CD8-positive, alpha-beta T cell (primary cell): ENCODE measurements at regions of chr2 and their contacts with region 1.

Region 1: GRCh38 chr2:223837287-223838061 is at the start of gene AP1S3:
- DNase-seq: peak; percentile 34 to 91 (median 67)
- ATAC-seq: peak; percentile 90
- H3K4me3 ChIP-seq: peak within 1 kb of the TSS; percentile 65 to 85
- H3K4me3 Mint-ChIP-seq: peak within 1 kb of the TSS; percentile 96
- H3K27ac ChIP-seq: peak within 1 kb of the TSS in 1 of 2 experiments; percentile 15
- H3K27ac Mint-ChIP-seq: peak within 1 kb of the TSS; percentile 85
- H3K4me1 ChIP-seq: peaks cover 7% of the 10 kb centered on the region
- H3K4me1 Mint-ChIP-seq: peaks cover 11% of the 10 kb centered on the region
- H3K27me3 ChIP-seq: no peaks in the 10 kb centered on the region
- H3K27me3 Mint-ChIP-seq: peaks cover 6% of the 10 kb centered on the region
- CTCF ChIP-seq: no peak
- total RNA-seq, gene AP1S3: 0.76 to 1.2 TPM

Region 2: DNA sequence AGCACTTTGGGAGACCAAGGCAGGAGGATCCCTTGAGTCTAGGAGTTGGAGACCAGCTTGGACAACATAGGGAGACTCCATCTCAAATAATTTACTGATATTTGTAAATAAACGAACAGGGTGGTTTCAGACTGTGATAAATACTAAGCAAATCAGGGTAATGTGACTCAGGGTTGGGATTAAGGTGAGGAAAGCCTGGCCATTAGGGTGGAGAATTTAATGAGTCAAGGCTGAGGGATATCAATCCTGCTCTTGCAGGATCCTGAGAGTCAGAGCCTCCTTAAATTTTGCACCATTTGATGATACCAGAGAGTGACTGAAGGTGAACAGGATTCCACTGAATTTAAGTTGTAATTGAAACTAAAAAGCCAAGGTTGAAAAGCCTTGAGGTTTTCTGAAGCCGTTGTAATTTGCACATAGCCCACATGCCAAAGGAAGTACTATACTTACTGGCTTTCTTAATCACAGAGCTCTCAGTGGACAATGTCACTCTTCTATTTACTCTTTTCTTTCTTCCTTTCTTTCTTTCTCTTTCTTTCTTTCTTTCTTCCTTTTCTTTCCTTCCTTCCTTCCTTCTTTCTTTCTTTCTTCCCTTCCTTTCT is 28.5 kb after region 1 on chr2:
- CTCF ChIA-PET with region 1: no interaction called
- POLR2A ChIA-PET with region 1: no interaction called
- intact Hi-C with region 1: loop called in 1 of 2 experiments (anchors 2 kb)
- DNase-seq: peak in 2 of 9 experiments; percentile 23 to 51
- ATAC-seq: peak; percentile 33
- H3K4me3 ChIP-seq: no peak overlapping the region
- H3K4me3 Mint-ChIP-seq: peak overlapping the region; percentile 33
- H3K27ac ChIP-seq: peak overlapping the region in 1 of 2 experiments; percentile 42
- H3K27ac Mint-ChIP-seq: peak overlapping the region; percentile 60
- H3K4me1 ChIP-seq: peaks cover 25% of the 10 kb centered on the region
- H3K4me1 Mint-ChIP-seq: peaks cover 23% of the 10 kb centered on the region
- H3K27me3 ChIP-seq: no peaks in the 10 kb centered on the region
- H3K27me3 Mint-ChIP-seq: no peaks in the 10 kb centered on the region
- CTCF ChIP-seq: no peak

Region 3: GRCh38 chr2:224749136-224749535 is 911.7 kb after region 1 on chr2:
- CTCF ChIA-PET with region 1: no interaction called
- POLR2A ChIA-PET with region 1: no interaction called
- intact Hi-C with region 1: no loop called
- DNase-seq: no peak
- ATAC-seq: no peak
- H3K4me3 ChIP-seq: no peak overlapping the region
- H3K4me3 Mint-ChIP-seq: no peak overlapping the region
- H3K27ac ChIP-seq: no peak overlapping the region
- H3K27ac Mint-ChIP-seq: no peak overlapping the region
- H3K4me1 ChIP-seq: no peaks in the 10 kb centered on the region
- H3K4me1 Mint-ChIP-seq: no peaks in the 10 kb centered on the region
- H3K27me3 ChIP-seq: no peaks in the 10 kb centered on the region
- H3K27me3 Mint-ChIP-seq: no peaks in the 10 kb centered on the region
- CTCF ChIP-seq: no peak

Region 4: DNA sequence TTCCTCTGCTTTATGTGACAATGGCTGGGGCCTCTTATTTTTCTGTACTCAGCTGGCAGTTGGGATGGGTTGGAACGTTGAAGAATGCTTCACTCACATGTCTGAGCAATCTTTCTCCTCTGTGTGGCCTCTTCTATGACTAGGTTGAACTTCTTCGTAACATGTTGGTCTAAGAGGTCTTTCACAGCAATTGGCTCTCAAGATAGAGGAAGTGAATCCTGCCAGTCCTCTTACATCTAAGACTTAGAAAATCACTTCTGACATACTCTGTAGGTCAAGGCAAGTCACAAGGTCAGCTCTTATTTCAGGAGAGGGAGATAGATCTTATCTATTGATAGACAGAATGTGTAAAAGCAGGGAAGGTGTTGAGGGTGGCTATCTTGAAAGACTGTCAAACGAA is 1736.1 kb after region 1 on chr2:
- CTCF ChIA-PET with region 1: no interaction called
- POLR2A ChIA-PET with region 1: no interaction called
- intact Hi-C with region 1: no loop called
- DNase-seq: no peak
- ATAC-seq: no peak
- H3K4me3 ChIP-seq: no peak overlapping the region
- H3K4me3 Mint-ChIP-seq: no peak overlapping the region
- H3K27ac ChIP-seq: no peak overlapping the region
- H3K27ac Mint-ChIP-seq: no peak overlapping the region
- H3K4me1 ChIP-seq: no peaks in the 10 kb centered on the region
- H3K4me1 Mint-ChIP-seq: no peaks in the 10 kb centered on the region
- H3K27me3 ChIP-seq: no peaks in the 10 kb centered on the region
- H3K27me3 Mint-ChIP-seq: peaks cover 7% of the 10 kb centered on the region
- CTCF ChIP-seq: no peak